ENCODE measurements at regions of chr1 and their contacts with region 1.

Region 1: DNA sequence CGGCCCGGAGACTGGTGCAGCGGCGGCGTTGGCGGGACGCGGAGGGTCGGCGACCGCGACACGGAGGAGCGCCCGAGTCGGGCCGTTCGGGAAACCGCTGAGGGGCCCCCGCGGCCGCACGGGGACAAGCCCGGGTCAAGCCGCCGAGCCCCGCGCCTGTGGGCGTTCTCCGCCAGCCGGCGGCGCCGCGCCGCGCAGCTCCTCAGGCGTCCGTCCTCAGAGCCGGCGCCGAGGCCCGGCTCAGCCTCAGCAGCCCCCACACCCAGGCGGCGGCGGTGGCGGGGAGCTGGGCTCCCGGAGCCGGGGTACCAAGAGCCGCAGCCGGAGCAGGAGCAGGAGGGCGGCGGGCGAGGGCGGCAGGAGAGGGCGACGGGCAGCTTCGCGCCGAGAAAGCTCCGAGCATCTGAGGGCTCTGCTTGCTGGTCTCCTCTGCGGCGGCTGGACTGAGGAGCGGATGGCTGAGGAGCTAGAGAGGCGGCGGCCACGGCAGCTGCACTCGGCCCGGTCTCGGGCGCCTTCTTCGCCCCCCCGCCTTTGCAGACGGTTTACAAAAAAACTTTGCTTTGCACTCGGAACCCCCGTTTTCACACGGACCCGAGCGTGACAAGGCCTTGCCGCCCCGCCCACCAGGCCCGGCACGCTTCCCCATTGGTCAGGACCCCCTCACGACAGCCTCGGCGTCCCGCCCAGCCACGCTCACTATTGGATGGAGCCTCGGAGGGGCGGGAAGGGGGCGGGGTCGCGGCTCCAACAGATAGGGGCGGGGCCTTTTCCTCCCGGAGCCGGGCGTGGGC is at the start of gene SLC30A1:
- DNase-seq: peak; percentile 99
- ATAC-seq: peak; percentile 87
- H3K4me3 ChIP-seq: peak within 1 kb of the TSS; percentile 66 to 92 (median 77)
- H3K4me3 Mint-ChIP-seq: peak within 1 kb of the TSS; percentile 99
- H3K27ac ChIP-seq: peak within 1 kb of the TSS in 1 of 2 donors; percentile 77
- H3K27ac Mint-ChIP-seq: peak within 1 kb of the TSS; percentile 94
- H3K4me1 ChIP-seq: peaks cover 25 to 26% of the 10 kb centered on the region in 2 donors
- H3K4me1 Mint-ChIP-seq: peaks cover 38% of the 10 kb centered on the region
- H3K27me3 ChIP-seq: no peaks in the 10 kb centered on the region
- H3K27me3 Mint-ChIP-seq: no peaks in the 10 kb centered on the region
- CTCF ChIP-seq: no peak
- total RNA-seq, gene SLC30A1: 12.2 and 12.3 TPM in 2 replicates

Region 2: DNA sequence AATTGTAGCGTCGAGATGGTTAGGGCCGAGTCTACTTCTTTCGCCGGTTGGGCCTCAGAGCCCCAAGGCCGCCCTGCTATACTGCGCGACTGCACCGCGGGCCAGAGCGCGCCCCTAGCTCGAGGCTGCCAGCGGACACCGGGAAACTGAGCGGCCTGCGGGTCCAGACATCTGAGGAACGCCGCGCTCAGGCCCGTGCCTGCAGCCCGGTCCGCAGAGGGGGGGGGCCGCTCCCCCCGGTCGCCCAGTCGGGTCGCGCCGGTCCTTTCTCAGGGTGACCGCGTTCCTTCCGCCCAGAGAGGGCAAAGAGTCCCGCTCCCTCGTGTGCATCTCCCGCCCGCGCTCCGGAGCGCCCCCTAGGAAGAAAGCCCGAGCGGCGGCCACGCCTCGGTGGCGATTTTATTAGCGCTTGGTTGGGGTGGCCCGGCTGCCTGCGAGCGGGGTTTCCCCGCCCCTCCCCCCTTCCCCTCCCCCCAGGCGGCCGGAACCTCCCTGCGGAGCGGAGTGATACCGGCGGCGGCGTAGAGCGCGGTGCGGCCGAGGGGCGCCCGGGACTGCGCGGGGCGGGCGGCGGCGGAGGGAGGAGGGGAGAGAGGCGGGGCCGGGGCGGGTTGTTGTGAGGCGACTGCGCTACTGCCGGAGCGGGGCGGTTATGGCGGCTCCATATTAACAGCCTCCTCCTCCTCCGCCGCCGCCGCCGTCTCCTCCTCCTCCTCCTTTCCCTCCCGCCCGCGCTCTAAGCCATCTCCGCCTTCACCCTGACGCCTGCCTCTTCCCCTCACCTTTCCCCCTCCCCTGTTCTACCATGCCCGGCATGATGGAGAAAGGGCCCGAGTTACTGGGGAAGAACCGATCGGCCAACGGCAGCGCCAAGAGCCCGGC is 319.8 kb before region 1 on chr1 and contains the start of gene RCOR3:
- CTCF ChIA-PET with region 1: no interaction called
- POLR2A ChIA-PET with region 1: no interaction called
- intact Hi-C with region 1: loop called (anchors 2 kb)
- DNase-seq: peak; percentile 93
- ATAC-seq: peak; percentile 74
- H3K4me3 ChIP-seq: peak within 1 kb of the TSS; percentile 81 to 93 (median 90)
- H3K4me3 Mint-ChIP-seq: peak within 1 kb of the TSS; percentile 92
- H3K27ac ChIP-seq: peak within 1 kb of the TSS; percentile 88 to 90
- H3K27ac Mint-ChIP-seq: peak within 1 kb of the TSS; percentile 96
- H3K4me1 ChIP-seq: peaks cover 11 to 16% of the 10 kb centered on the region in 2 donors
- H3K4me1 Mint-ChIP-seq: peaks cover 15% of the 10 kb centered on the region
- H3K27me3 ChIP-seq: no peaks in the 10 kb centered on the region
- H3K27me3 Mint-ChIP-seq: no peaks in the 10 kb centered on the region
- CTCF ChIP-seq: peak; percentile 84
- total RNA-seq, gene RCOR3: 120 and 124 TPM in 2 replicates

Region 3: GRCh38 chr1:211606914-211607755 is 28.3 kb after region 1 on chr1:
- CTCF ChIA-PET with region 1: interaction called, 12 read pairs
- POLR2A ChIA-PET with region 1: interaction called, 14 read pairs
- intact Hi-C with region 1: loop called (anchors 1 kb)
- DNase-seq: peak; percentile 75
- ATAC-seq: peak; percentile 82
- H3K4me3 ChIP-seq: peak overlapping the region; percentile 37 to 83 (median 67)
- H3K4me3 Mint-ChIP-seq: peak overlapping the region; percentile 90
- H3K27ac ChIP-seq: peak overlapping the region; percentile 36 to 79
- H3K27ac Mint-ChIP-seq: peak overlapping the region; percentile 90
- H3K4me1 ChIP-seq: peaks cover 18 to 23% of the 10 kb centered on the region in 2 donors
- H3K4me1 Mint-ChIP-seq: peaks cover 25% of the 10 kb centered on the region
- H3K27me3 ChIP-seq: no peaks in the 10 kb centered on the region
- H3K27me3 Mint-ChIP-seq: no peaks in the 10 kb centered on the region
- CTCF ChIP-seq: no peak

Region 4: DNA sequence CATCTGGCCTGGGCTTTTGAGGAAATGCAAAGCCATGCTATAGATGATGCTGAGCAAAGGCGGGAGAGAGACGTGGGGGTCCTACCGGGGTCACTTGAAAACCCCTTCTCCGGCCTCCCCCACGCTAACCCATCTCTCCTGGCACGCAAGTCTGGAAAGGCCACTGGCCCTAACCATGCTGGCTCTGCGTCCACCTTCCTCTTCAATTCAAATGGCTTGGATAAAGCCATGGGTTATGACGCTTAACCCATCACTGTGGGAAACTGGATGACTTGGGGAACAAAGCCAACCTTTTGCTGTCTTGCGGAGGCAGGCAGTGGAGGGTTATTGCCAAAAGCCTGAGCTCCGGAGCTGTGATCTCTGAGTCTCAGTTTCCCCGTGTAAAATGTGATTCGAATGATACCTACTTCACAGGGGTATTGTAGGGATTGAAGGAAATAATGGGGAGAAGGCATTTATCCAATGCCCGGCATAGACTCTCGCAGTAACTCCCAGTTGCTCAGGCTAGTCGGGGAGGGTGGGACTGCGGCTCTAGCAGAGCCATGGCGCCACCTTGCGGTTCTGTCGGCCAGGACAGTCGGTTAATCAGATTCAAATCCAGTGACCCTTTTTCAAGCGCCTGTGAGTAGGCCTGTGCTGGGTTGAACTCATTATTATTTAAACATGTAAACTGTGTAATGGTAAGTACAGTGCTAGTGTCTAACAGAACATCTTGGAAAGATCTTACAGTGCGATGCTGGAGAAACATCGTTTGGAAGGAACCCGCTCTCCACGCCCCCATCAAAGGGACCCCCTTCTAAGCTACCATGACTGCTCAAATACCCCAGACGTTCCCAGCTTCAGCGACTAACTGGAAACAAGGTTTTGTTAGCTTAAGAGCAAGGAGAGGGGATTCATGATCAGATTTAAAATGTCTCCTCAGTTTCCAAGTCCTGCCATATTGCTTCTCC is 76.3 kb after region 1 on chr1:
- CTCF ChIA-PET with region 1: interaction called, 5 read pairs
- POLR2A ChIA-PET with region 1: no interaction called
- intact Hi-C with region 1: loop called (anchors 1 kb)
- DNase-seq: peak; percentile 85
- ATAC-seq: peak; percentile 91
- H3K4me3 ChIP-seq: no peak overlapping the region
- H3K4me3 Mint-ChIP-seq: no peak overlapping the region
- H3K27ac ChIP-seq: no peak overlapping the region
- H3K27ac Mint-ChIP-seq: no peak overlapping the region
- H3K4me1 ChIP-seq: peaks cover 0 to 7% of the 10 kb centered on the region in 2 donors
- H3K4me1 Mint-ChIP-seq: no peaks in the 10 kb centered on the region
- H3K27me3 ChIP-seq: peaks cover 0 to 6% (median 1%) of the 10 kb centered on the region in 4 experiments
- H3K27me3 Mint-ChIP-seq: peaks cover 9% of the 10 kb centered on the region
- CTCF ChIP-seq: peak; percentile 94

Region 5: GRCh38 chr1:211830330-211831142 is 251.7 kb after region 1 on chr1 and contains the start of gene LPGAT1:
- CTCF ChIA-PET with region 1: no interaction called
- POLR2A ChIA-PET with region 1: no interaction called
- intact Hi-C with region 1: loop called (anchors 1 kb)
- DNase-seq: peak; percentile 86
- ATAC-seq: peak; percentile 85
- H3K4me3 ChIP-seq: peak within 1 kb of the TSS; percentile 48 to 85 (median 72)
- H3K4me3 Mint-ChIP-seq: peak within 1 kb of the TSS; percentile 94
- H3K27ac ChIP-seq: peak within 1 kb of the TSS; percentile 39 to 80
- H3K27ac Mint-ChIP-seq: peak within 1 kb of the TSS; percentile 91
- H3K4me1 ChIP-seq: peaks cover 44 to 49% of the 10 kb centered on the region in 2 donors
- H3K4me1 Mint-ChIP-seq: peaks cover 58% of the 10 kb centered on the region
- H3K27me3 ChIP-seq: no peaks in the 10 kb centered on the region
- H3K27me3 Mint-ChIP-seq: no peaks in the 10 kb centered on the region
- CTCF ChIP-seq: peak; percentile 76
- total RNA-seq, gene LPGAT1: 60.1 and 63.8 TPM in 2 replicates

Region 6: DNA sequence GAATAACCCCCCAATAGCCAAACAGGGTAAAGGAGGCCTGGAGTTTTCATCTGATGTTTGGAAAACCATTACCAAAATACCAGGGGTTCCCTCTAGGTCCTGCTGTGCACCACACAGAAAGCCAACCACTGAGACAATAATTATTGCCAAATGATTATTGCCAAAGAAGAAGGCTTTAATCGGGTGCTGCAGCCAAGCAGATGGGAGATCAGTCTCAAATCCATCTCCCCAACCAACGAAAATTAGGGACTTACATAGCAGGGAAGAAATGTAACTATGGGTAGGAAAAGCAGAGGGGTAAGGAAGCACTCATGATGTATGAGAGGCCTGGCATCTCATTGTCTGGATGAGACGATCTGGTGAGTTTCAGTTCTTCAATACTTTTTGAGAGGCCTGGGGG is 280.6 kb after region 1 on chr1:
- CTCF ChIA-PET with region 1: no interaction called
- POLR2A ChIA-PET with region 1: no interaction called
- intact Hi-C with region 1: no loop called
- DNase-seq: no peak
- ATAC-seq: no peak
- H3K4me3 ChIP-seq: no peak overlapping the region
- H3K4me3 Mint-ChIP-seq: no peak overlapping the region
- H3K27ac ChIP-seq: no peak overlapping the region
- H3K27ac Mint-ChIP-seq: no peak overlapping the region
- H3K4me1 ChIP-seq: no peaks in the 10 kb centered on the region
- H3K4me1 Mint-ChIP-seq: no peaks in the 10 kb centered on the region
- H3K27me3 ChIP-seq: peaks cover 0 to 1% (median 0%) of the 10 kb centered on the region in 4 experiments
- H3K27me3 Mint-ChIP-seq: peaks cover 12% of the 10 kb centered on the region
- CTCF ChIP-seq: no peak

Region 7: DNA sequence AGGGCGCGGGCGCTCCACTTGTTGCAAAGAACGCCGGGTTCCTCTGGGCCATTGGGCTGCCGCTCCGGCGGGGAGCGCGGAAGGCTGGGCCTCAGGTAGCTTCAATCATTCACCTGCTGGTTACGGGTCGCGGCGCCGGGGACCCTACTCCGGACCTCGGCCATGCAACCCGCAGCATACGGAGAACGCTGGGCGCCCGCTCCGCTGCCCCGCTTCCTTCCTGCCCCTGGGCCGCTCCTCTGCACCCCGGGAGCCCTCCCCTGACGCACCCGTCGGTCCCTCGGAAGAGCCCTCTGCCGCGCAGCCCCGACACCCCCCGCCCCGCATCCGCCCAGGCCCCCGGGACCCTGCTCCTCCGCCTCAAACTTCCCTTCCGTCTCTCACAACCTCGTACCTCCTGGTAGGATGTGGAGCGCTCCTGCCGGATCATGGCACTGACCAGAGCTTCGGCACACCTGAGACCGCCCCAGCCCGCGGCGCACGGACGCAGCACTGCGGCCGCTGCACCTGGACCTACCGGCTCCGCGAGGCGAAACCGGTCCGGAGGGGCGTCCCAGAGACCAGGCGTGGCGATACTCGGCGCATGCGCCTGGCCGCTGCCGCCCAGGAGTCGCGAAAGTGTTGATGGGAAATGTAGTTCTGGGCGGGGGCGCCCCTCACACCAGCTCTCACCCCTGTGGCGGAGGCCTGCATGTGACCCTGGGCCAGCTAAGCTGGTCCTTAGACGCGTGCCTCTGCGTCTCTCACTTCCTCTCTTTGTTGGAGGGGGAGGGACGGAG is 835.7 kb after region 1 on chr1 and contains the start of gene PACC1:
- CTCF ChIA-PET with region 1: no interaction called
- POLR2A ChIA-PET with region 1: no interaction called
- intact Hi-C with region 1: loop called (anchors 1 kb)
- DNase-seq: peak; percentile 98
- ATAC-seq: peak; percentile 98
- H3K4me3 ChIP-seq: peak within 1 kb of the TSS; percentile 64 to 93 (median 83)
- H3K4me3 Mint-ChIP-seq: peak within 1 kb of the TSS; percentile 99
- H3K27ac ChIP-seq: peak within 1 kb of the TSS; percentile 83 to 84
- H3K27ac Mint-ChIP-seq: peak within 1 kb of the TSS; percentile 86
- H3K4me1 ChIP-seq: peaks cover 24 to 35% of the 10 kb centered on the region in 2 donors
- H3K4me1 Mint-ChIP-seq: peaks cover 39% of the 10 kb centered on the region
- H3K27me3 ChIP-seq: no peaks in the 10 kb centered on the region
- H3K27me3 Mint-ChIP-seq: no peaks in the 10 kb centered on the region
- CTCF ChIP-seq: no peak
- total RNA-seq, gene PACC1: 16.7 and 18.3 TPM in 2 replicates